Activated CD4-positive, alpha-beta T cell treated with anti-CD3 and anti-CD28 coated beads for 36 hours (primary cell): ENCODE measurements at regions of chr12 and their contacts with region 1.

Region 1: DNA sequence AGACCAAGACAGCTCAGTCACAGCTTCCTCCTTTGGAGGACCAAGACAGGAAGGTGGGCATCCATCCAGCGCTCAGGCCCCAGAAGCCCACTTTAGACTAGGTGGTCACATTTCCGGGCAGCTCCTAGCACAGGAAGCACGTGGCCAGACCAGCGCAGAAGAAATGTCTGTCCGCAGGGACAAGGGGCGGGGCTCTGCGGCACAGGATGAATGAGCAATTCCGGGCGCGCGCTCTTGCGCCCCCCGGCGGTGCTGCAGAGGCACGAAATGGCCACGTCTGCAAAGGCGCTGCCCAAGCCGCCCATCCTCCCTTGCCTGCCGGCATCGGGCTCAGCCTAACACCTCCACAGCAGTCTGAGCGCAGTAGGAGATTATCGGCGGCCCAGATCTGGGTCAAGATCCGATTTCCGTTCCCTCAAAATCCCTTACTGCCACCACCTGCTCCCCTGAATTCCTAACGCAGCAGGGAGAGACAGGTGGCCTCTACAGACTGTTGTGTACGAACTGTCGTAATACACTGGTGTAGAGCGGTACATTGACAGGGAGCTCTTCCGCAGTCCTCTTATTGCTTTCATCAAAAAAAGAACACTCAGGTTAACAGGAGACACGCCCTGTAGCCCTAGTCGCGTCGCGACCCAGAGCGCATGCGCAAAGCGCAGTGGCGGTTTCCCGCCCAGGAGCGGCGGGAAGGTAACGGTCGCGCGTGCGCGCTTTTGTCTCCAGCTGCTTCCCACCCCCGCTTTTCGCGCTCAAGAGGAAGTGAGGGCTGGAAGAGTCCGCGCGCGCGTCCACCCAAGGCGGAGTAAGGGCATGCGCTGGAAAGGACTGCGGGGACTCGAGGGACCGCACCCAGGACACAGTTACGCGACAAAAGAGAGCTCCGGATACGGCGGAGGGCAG is 794 bp downstream of the TUBA1B start:
- DNase-seq: peak; percentile 96
- ATAC-seq: peak; percentile 58
- H3K4me3 Mint-ChIP-seq: peak overlapping the region; percentile 99
- H3K27ac Mint-ChIP-seq: peak overlapping the region; percentile 97
- H3K4me1 Mint-ChIP-seq: peaks cover 44% of the 10 kb centered on the region
- H3K27me3 Mint-ChIP-seq: no peaks in the 10 kb centered on the region

Region 2: GRCh38 chr12:47981496-47982260 is 1148.7 kb before region 1 on chr12:
- CTCF ChIA-PET with region 1: no interaction called
- POLR2A ChIA-PET with region 1: no interaction called
- intact Hi-C with region 1: no loop called
- DNase-seq: no peak
- ATAC-seq: no peak
- H3K4me3 Mint-ChIP-seq: no peak overlapping the region
- H3K27ac Mint-ChIP-seq: no peak overlapping the region
- H3K4me1 Mint-ChIP-seq: no peaks in the 10 kb centered on the region
- H3K27me3 Mint-ChIP-seq: no peaks in the 10 kb centered on the region

Region 3: GRCh38 chr12:48716493-48717251 is 413.7 kb before region 1 on chr12 and contains the start of gene CCNT1:
- CTCF ChIA-PET with region 1: no interaction called
- POLR2A ChIA-PET with region 1: no interaction called
- intact Hi-C with region 1: loop called (anchors 2 to 10 kb)
- DNase-seq: peak; percentile 100
- ATAC-seq: peak; percentile 95
- H3K4me3 Mint-ChIP-seq: peak within 1 kb of the TSS; percentile 99
- H3K27ac Mint-ChIP-seq: peak within 1 kb of the TSS; percentile 99
- H3K4me1 Mint-ChIP-seq: peaks cover 37% of the 10 kb centered on the region
- H3K27me3 Mint-ChIP-seq: no peaks in the 10 kb centered on the region
- total RNA-seq, gene CCNT1: 82.2 to 85.1 TPM

Region 4: DNA sequence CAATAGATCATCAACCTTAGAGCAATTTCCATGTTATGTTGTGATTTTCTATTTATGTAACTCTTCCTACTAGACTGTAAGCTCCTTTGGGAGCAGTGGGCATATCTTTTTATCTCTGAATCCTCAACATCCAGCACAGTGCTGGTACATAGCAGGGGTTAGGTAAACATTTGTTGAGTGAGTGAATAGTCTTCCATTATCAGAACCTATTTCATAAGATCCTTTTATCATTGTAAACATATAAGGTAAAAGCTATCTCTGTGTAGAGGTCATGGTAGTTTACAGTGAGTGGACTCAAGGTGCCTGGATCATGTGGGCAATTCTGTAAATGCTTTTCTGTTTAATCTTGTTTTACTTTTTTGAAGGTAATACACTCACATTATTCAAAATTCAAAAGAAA is 220.2 kb before region 1 on chr12:
- CTCF ChIA-PET with region 1: no interaction called
- POLR2A ChIA-PET with region 1: no interaction called
- intact Hi-C with region 1: no loop called
- DNase-seq: no peak
- ATAC-seq: no peak
- H3K4me3 Mint-ChIP-seq: no peak overlapping the region
- H3K27ac Mint-ChIP-seq: no peak overlapping the region
- H3K4me1 Mint-ChIP-seq: no peaks in the 10 kb centered on the region
- H3K27me3 Mint-ChIP-seq: peaks cover 2% of the 10 kb centered on the region

Region 5: GRCh38 chr12:48988030-48988649 is 142.3 kb before region 1 on chr12:
- CTCF ChIA-PET with region 1: no interaction called
- POLR2A ChIA-PET with region 1: no interaction called
- intact Hi-C with region 1: no loop called
- DNase-seq: peak; percentile 89
- ATAC-seq: peak; percentile 85
- H3K4me3 Mint-ChIP-seq: no peak overlapping the region
- H3K27ac Mint-ChIP-seq: no peak overlapping the region
- H3K4me1 Mint-ChIP-seq: no peaks in the 10 kb centered on the region
- H3K27me3 Mint-ChIP-seq: peaks cover 41% of the 10 kb centered on the region

Region 6: DNA sequence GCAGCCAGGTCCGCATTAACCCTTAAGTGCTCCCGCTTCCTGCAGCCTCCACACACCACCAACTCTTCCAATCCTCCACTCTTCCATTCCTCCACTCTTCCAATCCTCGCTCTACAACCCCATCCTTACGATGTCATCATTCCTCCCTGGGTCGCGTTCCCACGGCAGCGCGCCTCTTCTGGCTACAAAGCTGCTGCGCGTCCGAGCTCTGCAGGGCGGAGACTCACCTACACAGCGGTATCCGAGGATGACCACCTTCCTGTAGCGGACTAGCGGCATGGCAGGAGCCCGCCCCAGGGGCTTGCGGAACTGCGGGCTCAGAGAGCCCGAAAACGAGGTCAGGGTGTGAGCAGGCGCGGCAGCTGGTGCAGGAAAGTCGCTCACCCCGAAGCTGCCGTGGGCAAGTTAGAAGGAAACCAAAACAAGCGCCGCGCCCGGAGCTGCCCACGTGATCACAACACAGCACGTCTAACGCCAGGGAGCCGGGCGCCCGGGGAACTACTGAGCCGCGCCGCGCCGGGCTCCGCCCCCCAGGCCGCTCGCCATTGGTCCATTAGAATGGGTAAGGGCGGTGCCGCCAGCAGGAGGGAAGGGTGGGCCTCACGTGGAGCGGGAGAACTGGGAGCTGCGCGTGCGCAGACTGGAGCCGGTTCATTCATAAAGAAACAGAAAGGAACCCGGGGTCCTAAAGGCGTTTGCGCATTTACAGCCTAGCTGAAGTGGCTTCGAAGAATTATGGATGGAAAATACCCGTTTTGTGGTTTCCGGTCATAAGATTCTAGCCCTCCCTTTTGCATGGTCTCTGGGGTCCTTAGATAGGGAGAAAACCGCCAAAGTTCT is 60.7 kb before region 1 on chr12 and contains the start of gene RHEBL1:
- CTCF ChIA-PET with region 1: interaction called, 10 read pairs
- POLR2A ChIA-PET with region 1: interaction called, 18 read pairs
- intact Hi-C with region 1: loop called (anchors 1 to 5 kb)
- DNase-seq: peak; percentile 100
- ATAC-seq: peak; percentile 100
- H3K4me3 Mint-ChIP-seq: peak within 1 kb of the TSS; percentile 94
- H3K27ac Mint-ChIP-seq: peak within 1 kb of the TSS; percentile 91
- H3K4me1 Mint-ChIP-seq: peaks cover 15% of the 10 kb centered on the region
- H3K27me3 Mint-ChIP-seq: no peaks in the 10 kb centered on the region
- total RNA-seq, gene RHEBL1: 6.7 to 13.3 TPM

Region 7: DNA sequence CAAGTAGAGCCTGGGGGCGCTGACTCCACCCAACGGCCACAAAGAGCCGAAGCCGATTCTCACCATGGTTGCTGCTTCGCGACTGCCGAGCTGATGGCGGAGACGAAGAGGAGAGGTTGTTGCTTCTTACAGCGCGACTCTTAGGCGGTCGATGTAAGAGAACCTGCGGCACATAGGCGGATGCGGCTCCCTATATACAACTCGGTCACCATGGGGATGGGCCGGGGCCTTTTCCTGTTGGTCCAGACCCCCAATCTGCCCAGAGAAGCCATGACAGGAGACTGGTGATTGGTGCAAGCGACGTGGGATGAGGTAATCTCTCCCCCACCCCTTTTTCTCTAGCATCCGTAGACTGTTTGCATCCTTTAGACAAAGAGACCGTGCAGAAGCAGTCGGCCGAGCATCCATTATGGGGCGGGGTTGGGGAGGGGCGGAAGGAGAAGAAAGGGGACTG is 58.5 kb after region 1 on chr12 and contains the start of gene TUBA1A:
- CTCF ChIA-PET with region 1: interaction called, 7 read pairs
- POLR2A ChIA-PET with region 1: interaction called, 47 read pairs
- intact Hi-C with region 1: loop called (anchors 1 kb)
- DNase-seq: peak; percentile 97
- ATAC-seq: peak; percentile 95
- H3K4me3 Mint-ChIP-seq: peak within 1 kb of the TSS; percentile 92
- H3K27ac Mint-ChIP-seq: peak within 1 kb of the TSS; percentile 92
- H3K4me1 Mint-ChIP-seq: peaks cover 24% of the 10 kb centered on the region
- H3K27me3 Mint-ChIP-seq: no peaks in the 10 kb centered on the region
- total RNA-seq, gene TUBA1A: 75.7 to 98.5 TPM

Region 8: GRCh38 chr12:49366652-49367380 is 236.4 kb after region 1 on chr12:
- CTCF ChIA-PET with region 1: interaction called, 4 read pairs
- POLR2A ChIA-PET with region 1: interaction called, 7 read pairs
- intact Hi-C with region 1: loop called in 1 of 2 experiments (anchors 1 kb)
- DNase-seq: peak; percentile 94
- ATAC-seq: peak; percentile 86
- H3K4me3 Mint-ChIP-seq: peak overlapping the region; percentile 97
- H3K27ac Mint-ChIP-seq: peak overlapping the region; percentile 99
- H3K4me1 Mint-ChIP-seq: peaks cover 25% of the 10 kb centered on the region
- H3K27me3 Mint-ChIP-seq: no peaks in the 10 kb centered on the region